ENCODE measurements at regions of chr2 and their contacts with region 1.

Region 1: GRCh38 chr2:195498176-195498575 is 158.8 kb upstream of the SLC39A10 start:
- DNase-seq: peak; percentile 59
- ATAC-seq: peak; percentile 37; the same call in 1 of the 2 replicates
- H3K4me3 ChIP-seq: no peak overlapping the region
- H3K27ac ChIP-seq: no peak overlapping the region
- H3K4me1 ChIP-seq: 0 out of 2 replicates have a peak, but pooled peaks cover 7% of the 10 kb centered on the region
- H3K27me3 ChIP-seq: no peaks in the 10 kb centered on the region
- CTCF ChIP-seq: peak; percentile 72

Region 2: DNA sequence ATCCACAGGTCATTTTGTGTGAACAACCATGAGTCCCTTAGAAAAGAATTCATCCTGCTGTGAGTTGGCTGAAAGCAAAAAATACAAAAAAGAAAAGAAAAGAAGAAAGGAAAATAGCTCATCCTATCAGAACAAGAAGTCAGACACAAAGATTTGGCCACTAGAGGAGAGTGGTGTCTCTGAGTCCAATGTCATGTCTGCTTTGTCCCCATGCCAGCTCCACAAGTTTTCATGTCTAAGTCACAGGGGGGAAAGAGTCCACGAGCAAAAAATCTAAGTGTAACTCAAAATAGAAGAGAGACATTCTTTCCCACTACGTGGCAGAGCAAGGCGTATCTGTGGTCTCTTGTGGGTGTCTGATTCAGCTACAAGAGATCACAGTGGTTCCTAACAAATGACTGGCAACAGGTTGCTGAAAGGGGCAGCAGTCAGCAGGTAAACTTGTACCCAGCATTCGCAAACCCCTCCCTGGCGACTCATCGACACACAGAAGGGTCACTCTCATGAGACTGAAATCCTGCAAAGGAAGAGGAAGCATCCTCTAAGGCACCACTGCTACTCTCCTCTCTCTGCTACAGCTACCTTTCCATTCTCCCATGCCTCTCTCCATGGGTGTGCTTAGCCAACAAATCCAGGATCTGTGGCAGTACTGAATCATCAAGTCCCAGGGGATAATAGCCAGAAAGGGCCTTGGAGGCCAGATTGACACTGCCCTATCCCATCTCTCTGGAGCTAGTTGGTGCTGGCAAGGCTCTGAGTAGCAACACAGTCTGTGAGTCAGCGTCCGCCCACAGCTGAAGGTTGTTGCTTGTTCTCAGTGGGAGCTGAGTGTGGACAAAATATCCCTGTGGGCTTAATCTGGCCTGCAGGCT is 35.8 kb after region 1 on chr2:
- CTCF ChIA-PET with region 1: no interaction called
- POLR2A ChIA-PET with region 1: no interaction called
- intact Hi-C with region 1: loop called (anchors 5 kb)
- DNase-seq: peak; percentile 66
- ATAC-seq: peak; percentile 92
- H3K4me3 ChIP-seq: no peak overlapping the region
- H3K27ac ChIP-seq: peak overlapping the region; percentile 54
- H3K4me1 ChIP-seq: peaks cover 23% of the 10 kb centered on the region
- H3K27me3 ChIP-seq: no peaks in the 10 kb centered on the region
- CTCF ChIP-seq: no peak; the same call in 1 of the 2 replicates

Region 3: DNA sequence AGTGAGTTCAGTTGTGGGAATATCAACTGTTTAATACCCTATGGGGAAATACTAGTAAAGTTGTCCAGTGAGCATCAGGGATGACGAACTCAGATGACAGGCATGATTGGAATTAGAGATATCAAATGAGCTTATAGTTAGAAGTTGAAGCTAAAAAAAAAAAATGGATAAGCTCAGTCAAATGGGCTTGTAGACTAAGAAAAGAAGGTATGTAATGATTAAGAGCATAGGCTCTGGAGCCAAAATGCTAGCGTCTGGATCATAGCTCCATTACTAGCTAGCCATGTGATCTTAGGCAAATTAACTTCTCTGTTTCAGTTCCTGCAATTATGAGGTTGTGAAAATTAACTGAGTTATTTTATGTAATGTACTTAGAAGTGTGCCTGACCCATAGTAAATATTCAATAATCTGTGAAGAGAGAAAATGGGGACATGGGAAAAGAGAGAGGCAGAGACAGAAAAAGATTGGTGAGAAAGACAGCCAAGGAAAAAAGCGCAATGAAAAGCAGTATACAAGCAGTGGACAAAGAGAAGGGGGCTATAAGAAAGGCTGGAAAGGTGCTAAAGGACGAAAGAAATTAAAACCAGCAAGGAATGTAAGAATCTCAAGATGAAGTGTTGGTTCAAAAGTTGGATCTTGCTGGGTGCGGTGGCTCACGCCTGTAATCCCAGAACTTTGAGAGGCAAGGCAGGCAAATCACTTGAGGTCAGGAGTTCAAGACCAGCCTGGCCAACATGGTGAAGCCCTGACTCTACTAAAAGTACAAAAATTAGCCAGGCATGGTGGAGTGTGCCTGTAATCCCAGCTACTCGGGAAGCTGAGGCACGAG is 63.2 kb after region 1 on chr2:
- CTCF ChIA-PET with region 1: no interaction called
- POLR2A ChIA-PET with region 1: interaction called, 7 read pairs
- intact Hi-C with region 1: loop called (anchors 10 kb)
- DNase-seq: peak; percentile 95
- ATAC-seq: peak; percentile 64
- H3K4me3 ChIP-seq: no peak overlapping the region
- H3K27ac ChIP-seq: peak overlapping the region; percentile 96
- H3K4me1 ChIP-seq: peaks cover 64% of the 10 kb centered on the region
- H3K27me3 ChIP-seq: no peaks in the 10 kb centered on the region
- CTCF ChIP-seq: no peak

Region 4: GRCh38 chr2:195622956-195623355 is 124.8 kb after region 1 on chr2:
- CTCF ChIA-PET with region 1: no interaction called
- POLR2A ChIA-PET with region 1: no interaction called
- intact Hi-C with region 1: no loop called
- DNase-seq: peak; percentile 78
- ATAC-seq: peak; percentile 90
- H3K4me3 ChIP-seq: no peak overlapping the region
- H3K27ac ChIP-seq: no peak overlapping the region
- H3K4me1 ChIP-seq: peaks cover 6% of the 10 kb centered on the region
- H3K27me3 ChIP-seq: no peaks in the 10 kb centered on the region
- CTCF ChIP-seq: no peak

Measured in PC-3 (cell line).